ENCODE measurements at regions of chr16 and their contacts with region 1.

Region 1: DNA sequence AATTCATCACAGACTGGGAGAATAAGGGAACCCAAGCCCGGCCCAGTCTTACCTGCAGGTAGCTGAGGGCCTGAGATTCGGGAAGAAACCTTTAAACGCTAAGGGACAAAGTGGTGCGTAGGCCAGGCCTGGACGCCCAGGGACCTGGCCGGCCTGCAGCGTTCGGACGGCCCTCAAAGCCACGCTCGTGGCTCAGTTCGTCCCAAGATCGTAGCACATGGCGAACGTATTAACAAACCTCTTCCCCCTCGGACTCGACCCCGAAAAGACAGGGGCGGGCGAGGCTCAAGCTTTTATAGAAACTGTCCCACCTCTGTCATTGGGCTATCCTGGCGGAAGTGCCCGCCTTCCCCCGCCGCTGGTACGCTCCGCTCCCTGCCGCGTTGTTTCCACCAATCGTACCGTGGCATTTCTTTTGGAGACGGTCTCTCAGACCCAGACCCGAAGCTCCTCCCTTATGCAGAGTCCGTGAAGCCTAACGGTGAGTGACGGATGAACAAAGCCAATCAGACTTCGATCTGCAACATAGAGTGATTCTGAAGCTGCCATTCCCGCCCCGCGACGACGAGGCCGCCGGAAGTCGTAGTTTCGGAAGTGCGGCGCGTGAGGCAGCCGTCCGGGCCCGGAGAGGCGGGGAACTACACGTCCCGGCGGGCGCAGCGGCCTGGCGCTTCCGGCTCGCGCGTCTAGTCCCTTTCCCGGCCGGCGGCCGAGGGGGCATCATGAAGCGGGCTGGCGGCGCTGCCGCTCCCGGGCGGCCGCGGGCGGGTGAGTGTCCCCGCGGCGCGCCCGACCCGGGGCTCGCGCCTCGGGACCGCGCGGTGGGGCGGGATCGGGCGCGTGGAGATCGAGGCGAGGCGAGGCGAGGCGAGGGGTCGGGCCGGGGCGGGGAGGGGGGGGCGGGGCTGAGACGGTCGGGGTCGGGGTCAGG is at the start of gene TRAF7:
- DNase-seq: peak; percentile 99
- H3K4me3 Mint-ChIP-seq: peak within 1 kb of the TSS; percentile 95
- H3K27ac Mint-ChIP-seq: peak within 1 kb of the TSS; percentile 89
- H3K4me1 Mint-ChIP-seq: peaks cover 54% of the 10 kb centered on the region
- H3K27me3 Mint-ChIP-seq: no peaks in the 10 kb centered on the region
- total RNA-seq, gene TRAF7: 57.3 to 60.3 TPM

Region 2: GRCh38 chr16:1929578-1930337 is 225.6 kb before region 1 on chr16:
- CTCF ChIA-PET with region 1: no interaction called
- POLR2A ChIA-PET with region 1: no interaction called
- DNase-seq: peak; percentile 92
- H3K4me3 Mint-ChIP-seq: peak overlapping the region; percentile 58
- H3K27ac Mint-ChIP-seq: no peak overlapping the region
- H3K4me1 Mint-ChIP-seq: peaks cover 5% of the 10 kb centered on the region
- H3K27me3 Mint-ChIP-seq: peaks cover 2% of the 10 kb centered on the region

Region 3: GRCh38 chr16:1964506-1965395 is 190.6 kb before region 1 on chr16 and contains the start of gene RPS2:
- CTCF ChIA-PET with region 1: no interaction called
- POLR2A ChIA-PET with region 1: interaction called, 33 read pairs
- DNase-seq: peak; percentile 99
- H3K4me3 Mint-ChIP-seq: peak within 1 kb of the TSS; percentile 84
- H3K27ac Mint-ChIP-seq: peak within 1 kb of the TSS; percentile 95
- H3K4me1 Mint-ChIP-seq: peaks cover 54% of the 10 kb centered on the region
- H3K27me3 Mint-ChIP-seq: no peaks in the 10 kb centered on the region
- total RNA-seq, gene RPS2: 2,364 to 2,405 TPM

Region 4: DNA sequence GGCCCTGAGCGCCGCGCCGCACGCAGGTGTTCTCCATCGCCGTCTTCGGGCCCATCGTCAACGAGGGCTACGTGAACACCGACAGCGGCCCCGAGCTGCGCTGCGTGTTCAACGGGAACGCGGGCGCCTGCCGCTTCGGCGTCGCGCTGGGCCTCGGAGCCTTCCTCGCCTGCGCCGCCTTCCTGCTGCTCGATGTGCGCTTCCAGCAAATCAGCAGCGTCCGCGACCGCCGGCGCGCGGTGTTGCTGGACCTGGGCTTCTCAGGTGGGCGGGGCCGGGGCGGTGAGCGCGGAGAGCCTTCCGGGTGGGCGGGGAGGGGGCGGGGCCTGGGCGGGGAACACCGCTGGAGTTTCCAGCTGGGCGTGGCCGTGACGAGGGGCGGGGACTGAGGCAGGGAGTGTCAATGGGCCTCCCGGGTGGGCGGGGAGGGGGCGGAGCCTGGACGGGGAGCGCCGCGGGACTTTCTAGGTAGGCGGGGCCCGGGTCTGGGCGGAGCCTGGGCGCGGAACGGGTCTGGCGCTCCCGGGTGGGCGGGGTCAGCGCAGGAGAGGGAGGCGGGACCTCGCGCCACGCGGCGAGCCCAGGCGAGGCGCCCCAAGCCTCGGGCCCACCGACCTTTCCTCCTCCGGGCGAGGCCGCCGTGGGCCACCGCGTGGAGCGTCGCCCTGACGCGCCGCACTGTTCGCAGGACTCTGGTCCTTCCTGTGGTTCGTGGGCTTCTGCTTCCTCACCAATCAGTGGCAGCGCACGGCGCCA is 163.2 kb before region 1 on chr16:
- CTCF ChIA-PET with region 1: interaction called, 3 read pairs
- POLR2A ChIA-PET with region 1: interaction called, 16 read pairs
- DNase-seq: peak; percentile 98
- H3K4me3 Mint-ChIP-seq: peak overlapping the region; percentile 73
- H3K27ac Mint-ChIP-seq: peak overlapping the region; percentile 35
- H3K4me1 Mint-ChIP-seq: peaks cover 37% of the 10 kb centered on the region
- H3K27me3 Mint-ChIP-seq: peaks cover 14% of the 10 kb centered on the region

Region 5: GRCh38 chr16:2009789-2010510 is 145.4 kb before region 1 on chr16 and contains the start of gene ZNF598:
- CTCF ChIA-PET with region 1: interaction called, 18 read pairs
- POLR2A ChIA-PET with region 1: interaction called, 24 read pairs
- DNase-seq: peak; percentile 83
- H3K4me3 Mint-ChIP-seq: peak within 1 kb of the TSS; percentile 92
- H3K27ac Mint-ChIP-seq: peak within 1 kb of the TSS; percentile 88
- H3K4me1 Mint-ChIP-seq: peaks cover 41% of the 10 kb centered on the region
- H3K27me3 Mint-ChIP-seq: no peaks in the 10 kb centered on the region
- total RNA-seq, gene ZNF598: 52.1 to 53.6 TPM

Region 6: GRCh38 chr16:2047330-2048115 is 107.8 kb before region 1 on chr16 and contains the starts of genes NTHL1 and TSC2:
- CTCF ChIA-PET with region 1: interaction called, 5 read pairs
- POLR2A ChIA-PET with region 1: interaction called, 19 read pairs
- DNase-seq: peak; percentile 95
- H3K4me3 Mint-ChIP-seq: peak within 1 kb of the TSS; percentile 90
- H3K27ac Mint-ChIP-seq: peak within 1 kb of the TSS; percentile 73
- H3K4me1 Mint-ChIP-seq: peaks cover 21% of the 10 kb centered on the region
- H3K27me3 Mint-ChIP-seq: no peaks in the 10 kb centered on the region
- total RNA-seq, gene NTHL1: 22.5 to 24.5 TPM
- total RNA-seq, gene TSC2: 88.4 to 90.1 TPM

Region 7: DNA sequence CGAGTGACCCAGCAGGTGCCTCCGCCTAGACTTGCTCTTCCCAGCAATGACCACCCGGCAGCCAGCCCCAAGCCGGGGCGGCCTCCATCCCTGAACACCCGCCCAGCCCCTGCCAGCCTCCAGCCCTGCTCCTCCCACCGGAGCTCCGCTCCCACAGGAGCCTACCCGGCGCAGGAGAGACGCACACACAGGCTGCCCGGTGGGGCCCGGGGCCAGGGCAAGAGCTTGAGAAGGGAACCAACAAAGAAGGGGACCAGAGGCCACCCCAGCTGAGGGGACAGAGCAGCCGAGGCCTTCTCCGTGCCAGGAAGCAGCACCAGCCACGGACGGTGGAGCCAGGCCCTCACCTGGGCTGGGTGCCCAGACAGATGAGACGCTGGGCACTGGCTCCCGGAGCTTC is 33.5 kb before region 1 on chr16:
- CTCF ChIA-PET with region 1: no interaction called
- POLR2A ChIA-PET with region 1: no interaction called
- DNase-seq: no peak
- H3K4me3 Mint-ChIP-seq: no peak overlapping the region
- H3K27ac Mint-ChIP-seq: no peak overlapping the region
- H3K4me1 Mint-ChIP-seq: peaks cover 2% of the 10 kb centered on the region
- H3K27me3 Mint-ChIP-seq: no peaks in the 10 kb centered on the region

Region 8: DNA sequence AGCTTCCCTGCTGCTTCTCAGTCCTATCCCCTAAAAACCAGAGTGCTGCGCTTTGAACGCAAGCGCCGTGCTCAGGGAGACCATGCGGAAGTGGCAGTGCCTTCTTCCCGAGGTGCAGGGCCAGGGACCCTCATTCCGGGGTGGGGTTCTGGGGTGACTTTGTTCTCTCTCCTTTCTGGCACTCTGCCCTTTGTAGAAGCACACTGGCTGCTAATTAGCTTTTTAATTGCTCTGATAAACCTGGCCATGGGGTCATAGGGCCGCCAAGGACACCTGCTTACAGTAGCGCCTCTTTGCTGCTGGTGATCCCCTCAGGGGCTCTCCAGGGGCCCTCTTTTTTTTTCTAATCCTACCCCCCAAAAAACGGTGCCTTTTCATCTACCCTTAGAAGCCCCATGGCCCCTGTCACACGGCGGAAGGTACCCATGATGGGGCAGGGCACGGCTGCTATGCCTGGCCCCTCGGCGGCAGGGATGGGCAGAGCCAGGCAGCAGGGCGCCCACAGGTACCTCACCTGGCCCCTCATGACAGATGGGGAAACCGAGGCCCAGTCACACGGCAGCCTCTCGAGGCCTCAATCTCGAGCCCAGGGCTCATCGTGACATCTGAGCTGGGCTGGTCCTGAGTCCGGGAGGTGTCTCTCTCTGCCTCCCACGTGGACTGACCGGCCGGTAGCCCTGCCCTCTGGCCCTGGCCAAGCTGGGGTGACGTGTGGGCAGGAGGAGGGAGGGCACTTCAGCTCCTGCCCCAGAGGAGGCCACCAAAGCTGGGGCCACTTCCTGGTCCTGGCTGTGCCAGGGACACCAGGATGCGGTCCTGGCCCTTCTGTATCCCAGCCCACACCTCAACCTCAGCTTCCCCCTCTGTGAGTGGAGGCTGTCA is 11.6 kb after region 1 on chr16:
- CTCF ChIA-PET with region 1: interaction called, 3 read pairs
- POLR2A ChIA-PET with region 1: interaction called, 15 read pairs
- DNase-seq: no peak
- H3K4me3 Mint-ChIP-seq: no peak overlapping the region
- H3K27ac Mint-ChIP-seq: no peak overlapping the region
- H3K4me1 Mint-ChIP-seq: peaks cover 2% of the 10 kb centered on the region
- H3K27me3 Mint-ChIP-seq: no peaks in the 10 kb centered on the region

Region 9: GRCh38 chr16:2213817-2214720 is 58.7 kb after region 1 on chr16:
- CTCF ChIA-PET with region 1: interaction called, 5 read pairs
- POLR2A ChIA-PET with region 1: interaction called, 18 read pairs
- DNase-seq: no peak
- H3K4me3 Mint-ChIP-seq: peak overlapping the region; percentile 76
- H3K27ac Mint-ChIP-seq: peak overlapping the region; percentile 52
- H3K4me1 Mint-ChIP-seq: peaks cover 25% of the 10 kb centered on the region
- H3K27me3 Mint-ChIP-seq: no peaks in the 10 kb centered on the region

Measured in activated CD4-positive, alpha-beta memory T cell treated with anti-CD3 and anti-CD28 coated beads, Interleukin-2, amount 10 ng/mL, durations not matched to agents 7 days and 5 days (primary cell).